ENCODE measurements at regions of chr3 and their contacts with region 1.

Region 1: GRCh38 chr3:142929109-142929508 is 34.4 kb downstream of the PAQR9 start:
- DNase-seq: peak; percentile 49 to 56
- H3K4me3 ChIP-seq: no peak overlapping the region
- H3K27ac ChIP-seq: no peak overlapping the region
- H3K4me1 ChIP-seq: no peaks in the 10 kb centered on the region
- H3K27me3 ChIP-seq: no peaks in the 10 kb centered on the region
- CTCF ChIP-seq: peak; percentile 74

Region 2: GRCh38 chr3:142987080-142987700 is 58.1 kb after region 1 on chr3:
- CTCF ChIA-PET with region 1: no interaction called
- POLR2A ChIA-PET with region 1: no interaction called
- intact Hi-C with region 1: loop called (anchors 1 kb)
- DNase-seq: peak in 1 of 2 experiments; percentile 55
- H3K4me3 ChIP-seq: no peak overlapping the region
- H3K27ac ChIP-seq: no peak overlapping the region
- H3K4me1 ChIP-seq: no peaks in the 10 kb centered on the region
- H3K27me3 ChIP-seq: no peaks in the 10 kb centered on the region
- CTCF ChIP-seq: peak; percentile 79

Region 3: DNA sequence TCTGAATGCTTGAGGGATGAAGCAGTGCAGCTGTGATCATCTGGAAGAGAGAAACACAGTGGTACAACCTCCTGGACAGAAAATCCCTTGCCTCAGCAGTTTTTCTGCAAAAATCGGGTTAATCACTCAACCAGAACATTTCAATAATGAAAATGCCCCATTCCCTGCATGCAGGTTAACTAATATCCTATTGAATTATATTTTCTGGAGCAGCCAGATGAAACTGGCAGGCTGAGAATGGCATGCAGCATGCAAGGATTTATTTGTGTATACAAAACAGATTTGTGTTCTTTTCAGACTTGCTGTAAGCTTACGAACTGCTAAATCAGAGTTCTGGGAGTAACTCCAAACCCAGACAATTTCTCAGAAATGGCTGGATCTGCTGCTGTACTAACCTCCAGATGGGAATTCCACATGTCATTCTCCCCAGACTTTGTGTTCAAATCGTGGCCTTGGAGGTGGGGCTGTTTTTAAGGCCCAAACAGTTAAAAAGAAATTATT is 880.1 kb after region 1 on chr3:
- CTCF ChIA-PET with region 1: no interaction called
- POLR2A ChIA-PET with region 1: no interaction called
- intact Hi-C with region 1: no loop called
- DNase-seq: no peak
- H3K4me3 ChIP-seq: no peak overlapping the region
- H3K27ac ChIP-seq: no peak overlapping the region
- H3K4me1 ChIP-seq: no peaks in the 10 kb centered on the region
- H3K27me3 ChIP-seq: no peaks in the 10 kb centered on the region
- CTCF ChIP-seq: no peak